Activated CD4-positive, alpha-beta memory T cell treated with anti-CD3 and anti-CD28 coated beads for 36 hours (primary cell): ENCODE measurements at regions of chr12 and their contacts with region 1.

Region 1: DNA sequence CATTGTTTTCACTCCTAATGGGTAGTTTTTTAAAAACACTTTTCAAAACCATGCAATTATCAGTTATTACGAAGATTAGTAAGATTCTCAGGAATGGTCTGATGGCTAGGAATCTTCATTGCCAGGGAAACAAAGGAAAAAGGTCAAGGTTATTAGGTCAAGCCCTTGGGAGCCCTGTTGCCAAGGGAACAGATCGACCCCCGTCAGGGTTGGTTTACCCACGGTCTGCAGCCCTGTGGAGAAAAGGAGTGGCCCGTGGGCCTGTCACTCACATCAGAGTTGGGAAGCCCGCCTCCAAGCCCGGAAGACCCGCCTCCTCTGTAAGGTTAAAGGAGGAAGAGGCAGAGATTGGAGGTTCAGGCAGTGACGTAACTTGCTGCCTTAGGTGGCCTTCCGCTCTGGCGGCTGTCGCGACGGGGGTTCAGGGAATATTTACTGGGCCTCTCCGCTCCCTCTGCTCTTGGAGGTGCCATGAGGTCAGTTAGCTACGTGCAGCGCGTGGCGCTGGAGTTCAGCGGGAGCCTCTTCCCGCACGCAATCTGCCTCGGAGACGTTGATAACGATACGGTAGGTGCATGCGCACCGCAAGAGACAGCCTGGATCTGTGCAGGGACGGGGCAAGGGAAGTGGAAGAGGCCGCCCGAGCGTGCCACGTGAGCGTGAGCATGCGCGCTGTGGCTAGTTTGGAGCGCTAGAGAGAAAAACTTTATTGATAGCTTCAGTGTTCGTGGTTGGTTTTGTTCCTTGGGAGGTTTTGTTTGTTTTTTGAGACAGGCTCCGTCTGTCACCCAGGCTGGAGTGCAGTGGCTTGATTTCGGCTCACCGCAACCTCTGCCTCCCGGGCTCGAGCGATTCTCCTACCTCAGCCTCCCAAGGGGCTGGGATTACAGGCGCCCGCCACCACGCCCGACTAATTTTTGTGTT is at the start of gene ITFG2:
- DNase-seq: peak; percentile 98
- H3K4me3 Mint-ChIP-seq: peak within 1 kb of the TSS; percentile 99
- H3K27ac Mint-ChIP-seq: peak within 1 kb of the TSS; percentile 98
- H3K4me1 Mint-ChIP-seq: peaks cover 19% of the 10 kb centered on the region
- H3K27me3 Mint-ChIP-seq: no peaks in the 10 kb centered on the region
- total RNA-seq, gene ITFG2: 18.9 to 21.6 TPM

Region 2: DNA sequence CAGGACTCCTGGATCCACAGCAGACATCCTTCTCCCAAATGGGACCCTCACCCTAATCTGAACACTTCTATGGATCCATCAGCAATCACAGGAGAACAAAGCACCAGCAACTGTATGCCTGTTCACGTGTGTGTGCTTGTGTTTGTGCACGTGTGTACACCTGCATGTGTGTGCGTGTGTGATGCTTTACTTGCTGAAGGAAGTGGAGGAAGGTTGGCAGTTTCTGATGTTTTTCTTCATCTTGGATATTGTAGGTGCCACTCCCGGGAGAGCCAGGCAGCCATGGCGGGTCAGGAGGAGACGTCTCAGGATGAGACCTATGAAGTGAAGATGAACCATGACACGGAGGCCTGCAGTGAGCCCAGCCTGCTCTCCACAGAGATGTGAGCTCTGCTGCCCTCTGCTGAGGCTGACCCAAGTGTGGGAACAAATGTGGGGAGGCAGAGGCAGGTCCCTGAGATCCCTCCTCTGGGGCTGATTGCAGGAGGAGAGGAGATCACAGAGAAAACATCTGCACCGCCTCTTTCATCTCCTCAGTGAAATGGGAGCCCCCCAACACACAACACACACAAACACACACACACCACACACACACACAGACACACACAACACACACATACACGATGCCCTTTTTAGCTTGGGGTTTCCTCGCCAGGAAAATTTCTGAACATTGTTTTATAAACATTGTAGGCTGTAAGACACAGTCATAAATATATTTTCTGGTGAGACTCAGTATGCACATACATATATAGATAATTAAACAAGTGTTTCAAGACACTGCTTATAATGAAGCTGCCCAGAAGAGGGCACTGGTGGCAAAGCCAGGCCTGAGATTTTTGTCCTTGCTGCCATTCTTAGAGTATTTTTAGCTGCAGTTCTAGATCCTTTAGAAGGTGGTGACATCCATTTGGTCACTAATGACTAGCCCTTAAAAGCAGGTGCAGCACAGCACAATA is 130.0 kb before region 1 on chr12:
- CTCF ChIA-PET with region 1: no interaction called
- POLR2A ChIA-PET with region 1: no interaction called
- intact Hi-C with region 1: loop called (anchors 1 kb)
- DNase-seq: peak; percentile 63
- H3K4me3 Mint-ChIP-seq: no peak overlapping the region
- H3K27ac Mint-ChIP-seq: peak overlapping the region; percentile 44
- H3K4me1 Mint-ChIP-seq: peaks cover 9% of the 10 kb centered on the region
- H3K27me3 Mint-ChIP-seq: no peaks in the 10 kb centered on the region

Region 3: DNA sequence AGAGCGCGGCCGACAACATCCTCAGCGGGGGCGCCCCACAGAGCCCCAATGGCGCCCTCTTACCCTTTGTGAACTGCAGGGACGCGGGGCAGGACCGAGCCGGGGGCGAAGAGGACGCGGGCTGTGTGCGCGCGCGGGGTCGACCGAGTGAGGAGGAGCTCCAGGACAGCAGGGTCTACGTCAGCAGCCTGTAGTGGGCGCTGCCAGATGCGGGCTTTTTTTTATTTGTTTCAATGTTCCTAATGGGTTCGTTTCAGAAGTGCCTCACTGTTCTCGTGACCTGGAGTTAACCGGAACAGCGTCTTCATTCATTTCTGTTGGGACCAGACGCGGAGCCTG is 121.6 kb before region 1 on chr12:
- CTCF ChIA-PET with region 1: interaction called, 6 read pairs
- POLR2A ChIA-PET with region 1: interaction called, 6 read pairs
- intact Hi-C with region 1: loop called (anchors 1 kb)
- DNase-seq: peak; percentile 76
- H3K4me3 Mint-ChIP-seq: peak overlapping the region; percentile 81
- H3K27ac Mint-ChIP-seq: peak overlapping the region; percentile 84
- H3K4me1 Mint-ChIP-seq: peaks cover 19% of the 10 kb centered on the region
- H3K27me3 Mint-ChIP-seq: peaks cover 6% of the 10 kb centered on the region

Region 4: DNA sequence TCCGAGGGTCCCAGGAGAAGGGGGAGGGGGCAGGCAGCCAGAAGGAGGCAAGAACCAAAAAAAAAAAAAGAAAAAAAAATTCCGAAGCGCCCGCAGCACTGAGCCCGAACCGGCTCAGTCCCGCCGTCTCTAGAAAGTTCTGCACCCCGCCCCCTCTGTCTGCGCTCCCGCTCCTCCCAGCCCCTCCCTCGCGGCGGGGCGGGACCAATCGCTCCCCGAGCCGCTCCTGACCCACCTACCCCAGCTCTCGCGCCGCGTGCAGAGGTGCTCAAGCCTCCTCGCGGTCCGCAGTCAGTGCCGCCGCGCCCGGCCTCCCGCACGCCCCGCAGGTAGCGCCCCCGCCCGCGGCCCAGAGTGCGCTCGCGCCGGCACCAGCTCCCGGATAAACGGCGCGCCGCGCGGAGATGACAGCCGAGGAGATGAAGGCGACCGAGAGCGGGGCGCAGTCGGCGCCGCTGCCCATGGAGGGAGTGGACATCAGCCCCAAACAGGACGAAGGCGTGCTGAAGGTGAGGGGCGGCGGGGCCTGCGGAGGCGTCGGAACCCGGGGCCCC is 17.7 kb before region 1 on chr12 and contains the start of gene FKBP4:
- CTCF ChIA-PET with region 1: interaction called, 12 read pairs
- POLR2A ChIA-PET with region 1: no interaction called
- intact Hi-C with region 1: loop called (anchors 1 kb)
- DNase-seq: peak; percentile 93
- H3K4me3 Mint-ChIP-seq: peak within 1 kb of the TSS; percentile 91
- H3K27ac Mint-ChIP-seq: peak within 1 kb of the TSS; percentile 23
- H3K4me1 Mint-ChIP-seq: peaks cover 22% of the 10 kb centered on the region
- H3K27me3 Mint-ChIP-seq: no peaks in the 10 kb centered on the region
- total RNA-seq, gene FKBP4: 144 to 153 TPM

Region 5: GRCh38 chr12:2877047-2877952 is 64.7 kb after region 1 on chr12 and contains the starts of genes FOXM1 and RHNO1:
- CTCF ChIA-PET with region 1: interaction called, 4 read pairs
- POLR2A ChIA-PET with region 1: no interaction called
- intact Hi-C with region 1: loop called (anchors 2 kb)
- DNase-seq: peak; percentile 92
- H3K4me3 Mint-ChIP-seq: peak within 1 kb of the TSS; percentile 95
- H3K27ac Mint-ChIP-seq: peak within 1 kb of the TSS; percentile 97
- H3K4me1 Mint-ChIP-seq: peaks cover 38% of the 10 kb centered on the region
- H3K27me3 Mint-ChIP-seq: no peaks in the 10 kb centered on the region
- total RNA-seq, gene FOXM1: 79.3 to 80.0 TPM
- total RNA-seq, gene RHNO1: 68.0 to 80.2 TPM

Region 6: DNA sequence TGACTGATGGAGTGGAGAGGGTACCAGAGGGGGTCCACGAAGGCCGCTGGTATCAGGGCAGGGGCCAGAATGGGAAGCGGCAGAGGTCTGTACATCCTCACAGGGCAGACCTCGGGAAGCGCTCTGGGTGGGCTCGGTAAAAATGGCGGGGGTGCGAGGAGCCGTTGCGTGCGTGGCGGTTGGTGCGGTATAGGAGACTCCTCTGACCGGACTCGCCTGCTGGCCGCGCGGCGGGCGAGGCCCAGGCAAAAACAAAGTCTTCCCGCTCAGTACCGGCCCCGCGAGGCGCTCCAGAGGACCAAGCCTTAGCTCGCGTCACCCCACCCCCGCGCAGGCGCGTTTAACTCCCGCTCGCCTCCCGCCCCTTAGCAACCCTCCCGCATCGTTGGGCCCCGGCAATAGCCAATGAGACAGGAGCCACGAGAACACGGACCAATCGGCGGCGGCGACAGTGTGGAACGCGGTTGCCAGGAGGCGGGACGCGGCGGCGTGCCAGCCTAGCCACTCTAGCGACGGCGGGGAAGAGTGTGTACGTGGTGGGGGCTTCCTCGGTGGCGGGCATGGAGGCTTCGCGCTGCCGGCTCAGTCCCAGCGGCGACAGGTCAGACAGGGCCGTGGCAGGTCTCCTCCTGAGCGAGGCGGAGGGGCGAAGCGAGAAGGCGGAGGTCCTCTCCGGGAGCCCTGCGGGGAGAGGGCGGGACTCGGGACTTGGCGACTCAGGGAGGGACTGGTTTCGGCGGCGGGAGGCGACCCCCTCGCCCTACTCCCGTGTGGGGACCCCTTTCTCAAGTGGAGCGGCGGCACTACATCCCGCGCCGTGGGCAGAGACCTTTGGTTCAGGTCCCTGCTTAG is 78.1 kb after region 1 on chr12 and contains the start of gene TULP3:
- CTCF ChIA-PET with region 1: interaction called, 3 read pairs
- POLR2A ChIA-PET with region 1: no interaction called
- intact Hi-C with region 1: loop called (anchors 1 kb)
- DNase-seq: peak; percentile 99
- H3K4me3 Mint-ChIP-seq: peak within 1 kb of the TSS; percentile 80
- H3K27ac Mint-ChIP-seq: peak within 1 kb of the TSS; percentile 86
- H3K4me1 Mint-ChIP-seq: peaks cover 32% of the 10 kb centered on the region
- H3K27me3 Mint-ChIP-seq: no peaks in the 10 kb centered on the region
- total RNA-seq, gene TULP3: 5.5 to 6.5 TPM

Region 7: GRCh38 chr12:3872800-3873636 is 1060.5 kb after region 1 on chr12 and contains the start of gene PARP11:
- CTCF ChIA-PET with region 1: no interaction called
- POLR2A ChIA-PET with region 1: no interaction called
- intact Hi-C with region 1: loop called (anchors 5 kb)
- DNase-seq: peak; percentile 98
- H3K4me3 Mint-ChIP-seq: peak within 1 kb of the TSS; percentile 91
- H3K27ac Mint-ChIP-seq: peak within 1 kb of the TSS; percentile 97
- H3K4me1 Mint-ChIP-seq: peaks cover 46% of the 10 kb centered on the region
- H3K27me3 Mint-ChIP-seq: no peaks in the 10 kb centered on the region
- total RNA-seq, gene PARP11: 16.6 to 17.8 TPM